Motor neuron (in vitro differentiated cells): ENCODE measurements at regions of chr10 and their contacts with region 1.

Region 1: GRCh38 chr10:29857843-29858701 is 201.3 kb downstream of the JCAD start:
- ATAC-seq: peak; percentile 23 to 90 (median 48)
- H3K4me3 ChIP-seq: no peak overlapping the region
- H3K27ac ChIP-seq: no peak overlapping the region
- H3K4me1 ChIP-seq: peaks cover 0 to 2% of the 10 kb centered on the region in 2 donors

Region 2: DNA sequence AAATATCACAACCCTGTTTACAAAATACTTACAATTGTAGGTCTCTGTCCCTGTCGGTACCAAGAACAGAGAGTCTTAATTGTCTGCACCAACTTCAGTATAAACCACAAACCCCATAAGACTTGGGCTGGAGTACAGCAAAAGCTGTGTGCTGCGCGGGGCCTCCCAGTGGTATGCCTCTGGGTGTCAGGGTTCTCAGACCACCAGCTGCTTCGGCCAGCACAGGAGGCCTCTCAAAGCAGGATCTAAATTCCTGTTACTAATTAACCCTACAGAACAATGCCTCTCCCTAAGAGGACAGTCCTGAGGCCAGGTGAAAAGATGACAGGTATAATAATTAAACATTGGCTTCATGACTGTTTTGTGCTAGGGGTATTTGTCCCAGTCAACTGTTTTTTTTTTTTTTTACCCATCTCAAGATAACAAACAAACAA is 222.3 kb before region 1 on chr10:
- in situ Hi-C with region 1: loop called in 1 of 9 experiments (anchors 25 kb)
- ATAC-seq: peak in 4 of 8 experiments; percentile 41 to 75 (median 58)
- H3K4me3 ChIP-seq: no peak overlapping the region
- H3K27ac ChIP-seq: no peak overlapping the region
- H3K4me1 ChIP-seq: peaks cover 18 to 28% of the 10 kb centered on the region in 2 donors